B cell (primary cell): ENCODE measurements at regions of chr3 and their contacts with region 1.

Region 1: DNA sequence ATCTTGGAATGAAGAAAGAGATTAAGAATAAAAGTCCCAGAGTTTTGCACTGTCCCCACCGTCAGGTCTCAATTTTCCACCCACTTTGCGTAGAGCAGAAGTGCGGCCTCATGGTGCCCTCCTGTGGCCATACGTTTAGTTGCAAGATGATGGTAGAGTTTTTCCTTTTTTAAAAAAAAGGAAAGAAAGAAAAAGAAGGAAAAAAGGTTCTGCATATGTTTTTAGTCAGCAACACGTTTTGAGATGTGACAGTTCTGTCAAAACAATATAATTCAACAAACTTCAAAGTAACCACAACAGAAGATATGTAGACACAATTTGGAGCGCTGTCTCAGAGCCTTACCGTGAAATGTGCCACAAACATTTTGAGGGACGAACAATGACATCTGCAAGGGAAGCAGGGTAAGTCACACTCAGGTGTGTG is 24.6 kb downstream of the EBLN2 start:
- DNase-seq: peak; percentile 53
- ATAC-seq: peak; percentile 49
- H3K4me3 ChIP-seq: no peak overlapping the region
- H3K4me3 Mint-ChIP-seq: no peak overlapping the region
- H3K27ac ChIP-seq: no peak overlapping the region
- H3K27ac Mint-ChIP-seq: no peak overlapping the region
- H3K4me1 ChIP-seq: peaks cover 0 to 2% of the 10 kb centered on the region in 2 donors
- H3K4me1 Mint-ChIP-seq: peaks cover 2% of the 10 kb centered on the region
- H3K27me3 ChIP-seq: no peaks in the 10 kb centered on the region
- H3K27me3 Mint-ChIP-seq: peaks cover 3% of the 10 kb centered on the region
- CTCF ChIP-seq: peak; percentile 92

Region 2: DNA sequence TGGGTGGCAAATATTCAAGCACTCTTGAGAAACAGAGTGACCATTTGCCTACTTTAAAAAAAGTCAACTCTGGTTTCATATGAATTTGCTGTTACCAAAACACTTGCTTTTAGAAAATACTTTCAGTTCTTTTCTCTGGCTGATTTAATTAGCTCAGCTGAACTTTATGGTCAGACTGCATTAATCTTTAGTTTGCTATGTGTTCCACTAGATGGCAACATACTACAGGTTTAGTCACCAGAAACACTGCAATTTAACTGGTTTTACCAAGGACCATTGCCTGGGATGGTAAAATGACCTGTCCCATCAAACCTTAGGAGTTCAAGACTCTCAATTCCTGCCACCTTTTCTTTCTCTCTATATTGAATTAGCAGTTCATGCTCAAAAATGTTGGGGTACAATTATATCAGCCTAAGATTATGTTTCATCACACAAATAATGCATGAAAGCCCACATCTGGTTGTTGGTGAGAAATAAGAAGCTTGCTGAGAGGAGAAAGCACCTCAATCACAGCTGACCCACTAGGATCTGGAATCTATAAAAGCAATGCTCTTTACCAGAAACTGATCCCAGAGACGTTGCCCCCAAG is 1375.1 kb before region 1 on chr3:
- CTCF ChIA-PET with region 1: interaction called, 6 read pairs
- POLR2A ChIA-PET with region 1: interaction called, 3 read pairs
- intact Hi-C with region 1: loop called (anchors 1 kb)
- DNase-seq: peak; percentile 56
- ATAC-seq: peak; percentile 21
- H3K4me3 ChIP-seq: no peak overlapping the region
- H3K4me3 Mint-ChIP-seq: no peak overlapping the region
- H3K27ac ChIP-seq: no peak overlapping the region
- H3K27ac Mint-ChIP-seq: no peak overlapping the region
- H3K4me1 ChIP-seq: no peaks in the 10 kb centered on the region
- H3K4me1 Mint-ChIP-seq: no peaks in the 10 kb centered on the region
- H3K27me3 ChIP-seq: peaks cover 0 to 3% (median 0%) of the 10 kb centered on the region in 4 experiments
- H3K27me3 Mint-ChIP-seq: no peaks in the 10 kb centered on the region
- CTCF ChIP-seq: peak; percentile 77

Region 3: GRCh38 chr3:71875461-71875947 is 1210.6 kb before region 1 on chr3:
- CTCF ChIA-PET with region 1: no interaction called
- POLR2A ChIA-PET with region 1: no interaction called
- intact Hi-C with region 1: loop called (anchors 2 kb)
- DNase-seq: peak; percentile 88
- ATAC-seq: peak; percentile 99
- H3K4me3 ChIP-seq: no peak overlapping the region
- H3K4me3 Mint-ChIP-seq: no peak overlapping the region
- H3K27ac ChIP-seq: no peak overlapping the region
- H3K27ac Mint-ChIP-seq: no peak overlapping the region
- H3K4me1 ChIP-seq: peaks cover 5 to 10% of the 10 kb centered on the region in 2 donors
- H3K4me1 Mint-ChIP-seq: peaks cover 17% of the 10 kb centered on the region
- H3K27me3 ChIP-seq: peaks cover 0 to 30% (median 20%) of the 10 kb centered on the region in 4 experiments
- H3K27me3 Mint-ChIP-seq: peaks cover 42% of the 10 kb centered on the region
- CTCF ChIP-seq: peak; percentile 88

Region 4: DNA sequence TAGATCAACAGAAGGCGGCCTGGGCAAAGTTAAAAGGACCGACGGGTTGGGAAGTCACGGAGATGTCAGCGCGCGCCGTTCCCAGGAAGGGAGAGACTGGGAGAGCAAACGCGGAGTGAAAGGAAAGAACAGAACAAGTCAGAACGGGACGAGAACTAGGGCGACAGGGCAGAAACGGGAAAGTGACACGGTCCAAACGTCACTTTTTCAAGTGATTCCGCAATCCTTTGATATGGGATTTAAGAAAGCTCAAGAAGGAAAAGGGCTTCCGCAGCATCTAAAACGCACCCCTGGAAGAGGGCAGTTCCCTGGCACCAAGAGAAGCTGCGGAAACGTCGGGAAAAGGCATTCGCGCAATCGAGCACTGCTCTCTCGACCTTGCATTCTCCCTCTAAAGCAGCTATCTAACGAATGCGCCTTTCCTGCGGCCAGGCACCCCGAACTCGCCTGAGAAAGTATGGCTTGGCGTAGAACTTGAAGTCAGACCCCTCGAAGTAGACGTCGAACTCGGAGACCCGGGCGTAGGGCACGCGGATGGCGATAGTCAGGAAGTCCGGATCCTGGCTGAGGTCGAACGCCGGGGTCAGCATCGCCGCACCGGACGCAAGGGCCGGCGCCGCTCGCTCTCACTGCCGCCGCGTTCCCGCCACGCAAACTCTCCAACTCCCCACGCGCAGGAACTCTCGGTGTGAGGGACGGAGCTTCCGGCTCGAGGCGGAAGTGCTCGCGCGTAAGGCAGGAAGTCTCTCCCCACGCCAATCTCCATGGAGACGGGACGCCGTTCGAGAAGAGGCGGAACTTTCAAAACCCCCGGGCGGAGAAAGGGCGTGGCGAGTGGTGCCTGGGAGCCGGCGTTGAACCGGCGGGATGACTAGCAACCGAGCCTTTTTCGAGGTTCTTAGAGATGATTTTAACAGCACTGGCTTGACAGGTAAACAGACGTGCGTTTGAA is 238.1 kb before region 1 on chr3 and contains the start of gene SHQ1:
- CTCF ChIA-PET with region 1: interaction called, 21 read pairs
- POLR2A ChIA-PET with region 1: no interaction called
- intact Hi-C with region 1: no loop called
- DNase-seq: peak; percentile 95
- ATAC-seq: peak; percentile 94
- H3K4me3 ChIP-seq: peak within 1 kb of the TSS; percentile 67 to 92 (median 85)
- H3K4me3 Mint-ChIP-seq: peak within 1 kb of the TSS; percentile 93
- H3K27ac ChIP-seq: peak within 1 kb of the TSS in 1 of 2 donors; percentile 50
- H3K27ac Mint-ChIP-seq: peak within 1 kb of the TSS; percentile 82
- H3K4me1 ChIP-seq: peaks cover 18 to 20% of the 10 kb centered on the region in 2 donors
- H3K4me1 Mint-ChIP-seq: peaks cover 35% of the 10 kb centered on the region
- H3K27me3 ChIP-seq: no peaks in the 10 kb centered on the region
- H3K27me3 Mint-ChIP-seq: no peaks in the 10 kb centered on the region
- CTCF ChIP-seq: no peak
- total RNA-seq, gene SHQ1: 30.6 and 32.0 TPM in 2 replicates

Region 5: GRCh38 chr3:72938471-72939265 is 147.4 kb before region 1 on chr3:
- CTCF ChIA-PET with region 1: interaction called, 33 read pairs
- POLR2A ChIA-PET with region 1: no interaction called
- intact Hi-C with region 1: loop called (anchors 1 kb)
- DNase-seq: peak; percentile 59
- ATAC-seq: peak; percentile 64
- H3K4me3 ChIP-seq: no peak overlapping the region
- H3K4me3 Mint-ChIP-seq: no peak overlapping the region
- H3K27ac ChIP-seq: no peak overlapping the region
- H3K27ac Mint-ChIP-seq: no peak overlapping the region
- H3K4me1 ChIP-seq: no peaks in the 10 kb centered on the region
- H3K4me1 Mint-ChIP-seq: no peaks in the 10 kb centered on the region
- H3K27me3 ChIP-seq: peaks cover 0 to 3% (median 3%) of the 10 kb centered on the region in 4 experiments
- H3K27me3 Mint-ChIP-seq: peaks cover 17% of the 10 kb centered on the region
- CTCF ChIP-seq: peak; percentile 75

Region 6: GRCh38 chr3:73056014-73056844 is 29.9 kb before region 1 on chr3:
- CTCF ChIA-PET with region 1: interaction called, 18 read pairs
- POLR2A ChIA-PET with region 1: no interaction called
- intact Hi-C with region 1: no loop called
- DNase-seq: peak; percentile 31
- ATAC-seq: no peak
- H3K4me3 ChIP-seq: no peak overlapping the region
- H3K4me3 Mint-ChIP-seq: no peak overlapping the region
- H3K27ac ChIP-seq: no peak overlapping the region
- H3K27ac Mint-ChIP-seq: no peak overlapping the region
- H3K4me1 ChIP-seq: no peaks in the 10 kb centered on the region
- H3K4me1 Mint-ChIP-seq: peaks cover 4% of the 10 kb centered on the region
- H3K27me3 ChIP-seq: no peaks in the 10 kb centered on the region
- H3K27me3 Mint-ChIP-seq: no peaks in the 10 kb centered on the region
- CTCF ChIP-seq: peak; percentile 83